OCI-LY7 (cell line): ENCODE measurements at regions of chr7 and their contacts with region 1.

Region 1: DNA sequence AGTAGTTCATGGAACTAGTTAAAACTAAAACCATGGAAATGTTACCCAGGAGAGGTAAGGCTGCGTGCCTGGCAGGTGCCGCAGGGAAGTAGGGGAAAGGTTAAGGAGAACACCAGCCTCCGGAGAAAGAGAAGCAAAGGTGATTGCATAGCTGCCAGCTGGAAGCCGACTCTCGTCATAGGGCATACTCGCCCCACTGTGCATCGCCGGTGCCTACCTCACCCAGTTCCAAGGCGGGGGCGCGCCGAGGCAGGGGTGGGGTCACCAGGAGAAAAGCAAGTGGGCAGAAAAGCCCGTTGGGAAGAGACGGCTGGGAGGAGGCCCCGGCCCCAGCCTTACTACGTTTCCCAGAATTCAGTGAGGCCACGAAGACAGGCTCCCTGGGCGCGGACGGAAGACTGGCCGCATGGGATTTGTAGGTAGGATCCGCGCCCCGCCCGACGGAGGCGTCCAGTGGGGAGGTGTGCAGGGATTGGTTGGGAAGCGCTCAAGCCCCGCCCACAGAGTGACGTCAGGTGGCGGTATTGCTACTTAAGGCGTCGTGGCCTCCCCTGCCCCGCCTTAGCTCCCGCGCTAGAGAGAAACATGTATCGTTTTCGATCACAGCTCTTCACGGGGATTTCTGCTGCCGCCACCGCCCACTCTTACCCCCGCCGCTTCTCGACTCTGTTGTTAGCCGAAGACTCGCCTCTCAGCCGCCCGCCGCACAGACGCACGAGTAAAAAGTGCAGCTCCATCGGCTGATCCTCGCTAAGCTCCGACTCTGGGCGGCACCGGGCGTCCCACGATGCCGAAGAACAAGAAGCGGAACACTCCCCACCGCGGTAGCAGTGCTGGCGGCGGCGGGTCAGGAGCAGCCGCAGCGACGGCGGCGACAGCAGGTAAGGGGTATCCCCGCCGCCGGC is at the start of gene IFRD1:
- DNase-seq: peak; percentile 97
- H3K4me3 ChIP-seq: peak within 1 kb of the TSS; percentile 95
- H3K27ac ChIP-seq: peak within 1 kb of the TSS; percentile 74
- H3K4me1 ChIP-seq: peaks cover 20% of the 10 kb centered on the region
- CTCF ChIP-seq: no peak
- total RNA-seq, gene IFRD1: 49.1 and 54.9 TPM in 2 replicates

Region 2: DNA sequence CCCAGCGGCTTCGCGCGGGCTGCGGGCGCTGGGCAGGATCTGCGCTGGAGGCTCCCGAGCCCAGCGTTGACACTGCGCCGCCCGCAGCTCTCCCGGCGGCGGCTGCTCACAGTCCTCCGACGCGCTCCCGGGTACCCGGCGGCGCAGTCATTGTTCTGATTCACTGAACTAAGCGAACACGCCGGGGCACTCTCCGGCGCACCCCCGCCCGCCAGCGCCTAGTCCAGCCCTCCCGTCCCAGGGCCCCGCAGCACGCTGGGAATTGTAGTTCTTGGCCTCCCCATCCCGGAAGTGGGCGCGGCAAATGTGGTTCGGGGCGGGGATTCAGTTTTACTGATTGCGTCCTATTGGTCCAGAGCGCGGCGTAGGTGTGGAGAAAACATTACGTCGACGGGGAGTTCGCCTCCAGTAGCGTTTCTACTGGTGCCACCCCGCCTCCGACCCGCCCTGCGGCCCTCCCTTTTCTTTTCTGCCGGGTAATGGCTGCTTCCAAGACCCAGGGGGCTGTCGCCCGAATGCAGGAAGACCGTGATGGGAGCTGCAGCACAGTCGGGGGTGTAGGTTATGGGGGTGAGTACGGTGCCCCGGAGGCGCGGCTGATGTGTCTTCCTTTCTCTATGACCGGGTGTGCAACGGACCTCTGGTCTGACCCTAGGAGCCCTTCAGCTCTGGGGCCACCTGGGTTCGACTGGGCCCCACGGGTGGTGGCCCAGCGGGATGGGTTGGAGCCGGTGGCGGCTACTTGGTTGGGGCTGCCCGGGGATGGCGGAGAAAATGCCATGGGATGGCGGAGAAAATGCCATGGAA is 243.7 kb before region 1 on chr7 and contains the starts of genes DOCK4 and ZNF277:
- CTCF ChIA-PET with region 1: no interaction called
- POLR2A ChIA-PET with region 1: interaction called, 6 read pairs
- intact Hi-C with region 1: loop called (anchors 1 kb)
- DNase-seq: peak; percentile 99
- H3K4me3 ChIP-seq: peak within 1 kb of the TSS; percentile 95
- H3K27ac ChIP-seq: no peak within 1 kb of the TSS
- H3K4me1 ChIP-seq: peaks cover 21% of the 10 kb centered on the region
- CTCF ChIP-seq: no peak
- total RNA-seq, gene DOCK4: 1.9 and 4.9 TPM in 2 replicates
- total RNA-seq, gene ZNF277: 16.9 and 18.1 TPM in 2 replicates

Region 3: DNA sequence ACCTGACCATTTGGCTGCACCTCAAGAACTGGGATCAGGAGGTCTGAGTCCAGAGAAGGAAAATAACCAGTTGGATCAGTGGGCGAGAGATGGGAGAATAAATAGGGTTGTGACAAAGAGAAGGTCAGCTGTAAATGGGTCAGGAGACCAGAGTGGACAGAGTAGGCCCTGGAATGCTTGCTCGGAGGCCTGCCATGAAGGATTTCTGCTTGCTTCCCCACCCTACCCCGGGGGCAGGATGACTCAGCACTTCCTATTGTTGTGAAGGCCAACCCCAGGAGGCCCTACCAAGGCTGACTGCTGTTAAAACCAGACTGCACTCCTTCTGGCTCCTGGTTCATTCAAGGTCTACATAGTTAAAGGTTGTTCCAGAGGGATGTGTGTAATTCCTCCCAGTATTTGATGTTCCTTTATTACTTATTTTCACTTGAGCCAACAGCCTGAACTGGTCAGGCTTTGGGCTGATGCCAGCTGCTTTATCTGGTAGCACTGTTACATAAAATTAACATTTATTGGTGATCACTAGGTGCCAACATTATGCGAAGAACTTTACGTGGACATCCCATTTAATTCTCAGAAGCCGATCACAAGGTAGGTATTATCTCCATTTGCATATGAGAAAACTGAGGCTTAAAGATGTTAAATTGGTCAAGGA is 27.2 kb before region 1 on chr7:
- CTCF ChIA-PET with region 1: interaction called, 15 read pairs
- POLR2A ChIA-PET with region 1: interaction called, 71 read pairs
- intact Hi-C with region 1: loop called (anchors 1 kb)
- DNase-seq: peak; percentile 57
- H3K4me3 ChIP-seq: peak overlapping the region; percentile 54
- H3K27ac ChIP-seq: peak overlapping the region; percentile 92
- H3K4me1 ChIP-seq: peaks cover 50% of the 10 kb centered on the region
- CTCF ChIP-seq: no peak

Region 4: DNA sequence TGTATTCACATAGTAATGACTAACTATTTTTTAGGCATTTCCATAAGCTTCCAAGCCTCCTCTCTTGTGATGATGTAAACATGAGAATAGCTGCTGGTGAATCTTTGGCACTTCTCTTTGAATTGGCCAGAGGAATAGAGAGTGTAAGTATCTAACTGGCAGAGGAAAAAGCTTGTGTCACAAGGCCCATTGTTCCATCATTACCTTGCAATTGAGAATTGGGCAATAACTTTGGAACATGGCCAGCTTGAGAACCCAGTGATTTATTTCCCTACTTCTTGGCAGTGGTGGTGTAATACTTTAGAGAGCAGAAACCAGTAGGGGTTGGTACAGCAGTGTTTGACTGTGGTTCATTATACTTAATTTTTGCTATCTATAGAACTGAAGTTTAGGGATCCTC is 12.1 kb after region 1 on chr7:
- CTCF ChIA-PET with region 1: interaction called, 3 read pairs
- POLR2A ChIA-PET with region 1: interaction called, 81 read pairs
- intact Hi-C with region 1: no loop called
- DNase-seq: no peak
- H3K4me3 ChIP-seq: no peak overlapping the region
- H3K27ac ChIP-seq: no peak overlapping the region
- H3K4me1 ChIP-seq: no peaks in the 10 kb centered on the region
- CTCF ChIP-seq: no peak

Region 5: DNA sequence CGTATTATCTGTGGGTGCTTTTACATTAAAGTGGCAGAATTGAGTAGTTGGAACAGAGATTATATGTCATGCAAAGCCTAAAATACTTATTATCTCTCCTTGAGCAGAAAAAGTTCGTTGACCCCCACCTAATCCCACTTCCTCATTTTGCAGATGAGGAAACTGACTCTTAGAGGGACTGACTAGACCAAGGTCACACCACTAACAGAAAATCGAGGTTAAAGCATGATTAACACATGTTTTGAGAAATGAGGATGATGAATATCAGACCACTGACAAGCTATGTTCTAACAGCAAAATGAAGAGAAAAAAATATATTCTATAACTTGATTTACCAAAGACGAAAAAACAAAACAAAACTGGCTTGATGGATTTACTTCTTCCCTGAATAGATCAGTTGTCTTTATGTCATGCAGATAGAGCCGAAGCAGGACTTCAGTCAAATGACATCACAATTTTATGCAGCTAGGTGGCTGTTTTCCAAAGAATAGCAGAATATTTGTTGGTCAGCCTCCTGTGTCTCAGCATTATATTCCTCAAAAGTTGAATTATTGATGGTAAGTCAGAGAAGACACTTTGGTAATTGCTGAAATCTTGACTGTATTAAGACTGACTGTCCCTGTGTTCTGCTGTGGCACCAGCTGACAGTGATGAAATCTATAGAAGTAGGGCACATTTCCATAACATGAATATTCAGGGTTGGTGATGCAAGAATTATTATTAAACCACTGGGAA is 692.4 kb after region 1 on chr7:
- CTCF ChIA-PET with region 1: no interaction called
- POLR2A ChIA-PET with region 1: no interaction called
- intact Hi-C with region 1: loop called (anchors 10 kb)
- DNase-seq: peak; percentile 85
- H3K4me3 ChIP-seq: peak overlapping the region; percentile 11
- H3K27ac ChIP-seq: peak overlapping the region; percentile 95
- H3K4me1 ChIP-seq: peaks cover 53% of the 10 kb centered on the region
- CTCF ChIP-seq: no peak